ENCODE measurements at regions of chr3 and their contacts with region 1.

Region 1: DNA sequence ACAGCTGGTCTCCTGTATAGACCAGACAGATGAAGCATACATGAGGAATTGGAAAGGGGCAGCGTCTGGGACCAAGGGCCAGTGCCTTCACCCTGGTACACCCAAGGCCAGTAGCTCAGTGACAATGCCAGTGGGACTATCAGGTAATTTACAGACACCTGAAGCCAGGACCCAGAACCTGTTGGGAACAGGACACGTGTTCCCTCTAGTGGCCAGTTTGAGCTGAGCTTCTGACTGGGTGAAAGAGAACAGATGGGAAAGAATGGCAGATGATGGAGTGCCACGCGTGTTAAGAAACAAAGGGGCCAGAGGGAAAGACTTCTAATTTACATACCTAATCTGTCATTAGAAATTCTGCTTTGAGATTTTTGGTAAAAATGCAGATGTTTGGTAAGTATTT is 5.1 kb upstream of the SLC25A38 start:
- DNase-seq: peak; percentile 84
- H3K4me3 ChIP-seq: no peak overlapping the region
- H3K27ac ChIP-seq: no peak overlapping the region
- H3K4me1 ChIP-seq: no peaks in the 10 kb centered on the region
- H3K27me3 ChIP-seq: no peaks in the 10 kb centered on the region
- CTCF ChIP-seq: peak; percentile 65

Region 2: GRCh38 chr3:38566215-38566528 is 811.9 kb before region 1 on chr3:
- intact Hi-C with region 1: no loop called
- DNase-seq: no peak
- H3K4me3 ChIP-seq: no peak overlapping the region
- H3K27ac ChIP-seq: no peak overlapping the region
- H3K4me1 ChIP-seq: no peaks in the 10 kb centered on the region
- H3K27me3 ChIP-seq: no peaks in the 10 kb centered on the region
- CTCF ChIP-seq: no peak

Region 3: DNA sequence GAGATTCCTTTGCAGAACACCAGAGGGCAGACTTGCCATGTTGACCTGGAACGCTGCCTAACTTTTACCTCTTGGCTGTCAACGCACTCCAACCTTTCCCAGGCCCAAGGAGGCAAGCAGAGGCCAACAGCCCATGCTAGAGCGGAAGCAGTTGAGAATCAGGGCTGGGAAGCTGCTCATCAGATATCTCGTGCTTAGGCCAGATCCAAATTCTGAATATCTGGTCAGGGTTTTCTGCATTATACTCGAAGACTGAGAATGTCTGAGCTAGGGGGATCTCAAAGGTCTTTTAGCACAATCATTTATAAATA is 188.2 kb before region 1 on chr3:
- intact Hi-C with region 1: loop called (anchors 5 kb)
- DNase-seq: peak; percentile 70
- H3K4me3 ChIP-seq: no peak overlapping the region
- H3K27ac ChIP-seq: no peak overlapping the region
- H3K4me1 ChIP-seq: no peaks in the 10 kb centered on the region
- H3K27me3 ChIP-seq: no peaks in the 10 kb centered on the region
- CTCF ChIP-seq: peak; percentile 9

Region 4: DNA sequence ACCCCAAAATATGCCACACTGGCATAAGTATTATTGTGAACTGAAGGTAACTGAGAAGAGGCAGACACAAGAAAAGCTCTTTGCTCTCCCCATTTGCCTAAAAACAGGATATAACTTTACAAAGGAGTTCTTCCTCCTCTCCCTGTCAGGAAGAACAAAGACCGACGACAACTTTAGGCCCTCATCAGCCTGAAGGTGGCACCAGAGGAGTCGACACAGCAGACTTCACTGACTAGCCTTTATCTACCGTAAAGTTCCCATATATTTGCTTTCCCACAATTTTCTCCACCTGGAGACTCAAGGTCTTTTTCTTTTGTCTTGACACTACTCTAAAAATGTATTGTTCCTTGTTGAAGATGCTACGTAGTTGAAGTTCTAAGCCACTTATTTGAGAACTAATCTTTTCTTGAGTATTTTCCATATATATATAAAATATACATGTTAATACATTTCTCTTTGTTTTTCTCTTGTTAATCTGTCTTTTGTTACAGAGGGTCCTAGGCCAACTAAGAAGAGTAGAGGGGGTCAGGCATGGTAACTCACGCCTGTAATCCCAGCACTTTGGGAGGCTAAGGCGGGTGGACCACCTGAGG is 169.5 kb before region 1 on chr3:
- intact Hi-C with region 1: no loop called
- DNase-seq: peak; percentile 73
- H3K4me3 ChIP-seq: no peak overlapping the region
- H3K27ac ChIP-seq: no peak overlapping the region
- H3K4me1 ChIP-seq: no peaks in the 10 kb centered on the region
- H3K27me3 ChIP-seq: no peaks in the 10 kb centered on the region
- CTCF ChIP-seq: peak; percentile 40